ENCODE measurements at regions of chr5 and their contacts with region 1.

Region 1: DNA sequence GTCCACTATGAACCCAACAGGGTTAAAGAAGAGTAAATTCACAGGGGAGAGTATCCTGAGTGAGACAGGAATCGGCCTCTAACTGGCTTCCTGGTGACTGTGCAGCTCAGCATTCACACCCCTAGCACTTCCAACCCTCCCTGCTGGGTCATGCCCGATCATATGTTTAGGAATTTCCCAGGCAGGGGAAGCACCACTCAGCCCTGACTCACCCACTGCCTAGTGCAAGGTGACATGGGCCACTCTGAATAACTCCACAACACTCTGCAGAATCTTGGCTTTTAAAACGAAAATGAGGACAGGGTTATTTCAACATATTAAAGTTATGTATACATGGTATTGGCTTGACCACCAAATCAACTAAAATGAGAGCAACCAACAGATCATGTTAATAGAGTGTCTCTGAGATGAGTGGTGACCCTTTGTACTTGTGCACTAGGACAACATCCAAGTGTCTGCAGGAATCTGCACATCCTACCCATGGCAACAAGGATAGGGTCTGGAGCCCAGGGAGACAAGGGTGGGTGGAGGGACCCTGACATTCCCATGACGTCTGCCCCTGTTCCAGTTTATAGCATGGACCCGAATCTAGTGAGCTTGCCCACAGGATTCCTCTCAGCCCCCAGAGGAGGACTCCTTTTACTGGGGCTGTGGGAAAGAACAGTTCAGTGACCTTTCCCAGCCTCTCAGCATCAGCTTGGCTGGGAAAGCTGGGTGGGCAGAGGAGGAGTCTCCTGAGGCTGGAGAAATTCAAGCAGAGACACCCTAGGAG is 485.8 kb downstream of the SEMA5A start:
- DNase-seq: peak; percentile 99
- ATAC-seq: peak; percentile 95
- H3K4me3 ChIP-seq: no peak overlapping the region
- H3K27ac ChIP-seq: peak overlapping the region; percentile 85
- H3K4me1 ChIP-seq: peaks cover 21% of the 10 kb centered on the region
- H3K27me3 ChIP-seq: no peaks in the 10 kb centered on the region
- CTCF ChIP-seq: 0 out of 2 replicates have a peak, but pooled peaks have one; percentile 5
- POLR2A ChIP-seq: peak; percentile 27
- RAD21 ChIP-seq: peak; percentile 35

Region 2: GRCh38 chr5:7886849-7887475 is 1173.1 kb before region 1 on chr5:
- CTCF ChIA-PET with region 1: no interaction called
- POLR2A ChIA-PET with region 1: no interaction called
- dilution Hi-C with region 1: no loop called
- in situ Hi-C with region 1: loop called (anchors 25 kb)
- intact Hi-C with region 1: no loop called
- DNase-seq: peak; percentile 72
- ATAC-seq: peak; percentile 76
- H3K4me3 ChIP-seq: no peak overlapping the region
- H3K27ac ChIP-seq: peak overlapping the region; percentile 40; the same call in 1 of the 2 replicates
- H3K4me1 ChIP-seq: peaks cover 4% of the 10 kb centered on the region
- H3K27me3 ChIP-seq: no peaks in the 10 kb centered on the region
- CTCF ChIP-seq: peak; percentile 72
- POLR2A ChIP-seq: no peak
- RAD21 ChIP-seq: peak; percentile 73

Region 3: DNA sequence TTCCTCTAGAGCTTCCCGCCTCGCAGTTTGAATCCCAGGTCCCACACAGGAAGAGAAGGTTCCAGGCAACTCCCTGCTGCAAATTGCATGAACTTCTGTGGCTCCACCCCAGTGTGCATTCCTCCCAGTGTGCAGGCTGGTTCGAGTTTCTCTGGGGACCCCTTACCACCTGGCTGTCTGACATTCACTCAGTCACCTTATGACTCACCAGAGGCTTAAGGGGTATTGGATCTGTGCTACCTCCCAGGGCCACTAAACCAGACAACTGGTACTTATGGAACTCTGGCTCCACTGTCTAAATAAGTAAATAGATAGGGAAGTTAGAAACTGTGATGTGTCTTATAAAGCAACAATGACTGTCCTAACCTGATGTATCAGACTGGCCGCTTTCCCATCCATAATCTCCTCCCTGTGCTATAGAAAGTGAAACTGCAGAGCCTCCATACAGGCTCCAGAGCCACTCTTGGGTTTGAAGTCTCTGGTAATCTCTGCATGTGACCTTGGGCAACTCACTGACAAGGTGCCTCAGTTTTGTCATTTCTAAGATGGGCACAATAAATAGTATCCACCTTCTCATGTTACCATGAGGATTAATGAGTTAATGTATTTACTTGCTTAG is 234.9 kb before region 1 on chr5:
- CTCF ChIA-PET with region 1: no interaction called
- POLR2A ChIA-PET with region 1: no interaction called
- dilution Hi-C with region 1: no loop called
- in situ Hi-C with region 1: no loop called
- intact Hi-C with region 1: no loop called
- DNase-seq: peak; percentile 40
- ATAC-seq: no peak
- H3K4me3 ChIP-seq: no peak overlapping the region
- H3K27ac ChIP-seq: 0 out of 2 replicates have a peak overlapping the region, but pooled peaks have one; percentile 4
- H3K4me1 ChIP-seq: peaks cover 25% of the 10 kb centered on the region
- H3K27me3 ChIP-seq: no peaks in the 10 kb centered on the region
- CTCF ChIP-seq: no peak
- POLR2A ChIP-seq: no peak
- RAD21 ChIP-seq: no peak

Measured in IMR-90 (cell line).